CD4-positive, alpha-beta T cell (primary cell): ENCODE measurements at regions of chr2 and their contacts with region 1.

Region 1: GRCh38 chr2:100427628-100428258 is 10.3 kb upstream of the CHST10 start:
- DNase-seq: peak; percentile 55 to 77 (median 65)
- ATAC-seq: peak; percentile 79
- H3K4me3 ChIP-seq: no peak overlapping the region
- H3K4me3 Mint-ChIP-seq: no peak overlapping the region
- H3K27ac ChIP-seq: no peak overlapping the region
- H3K27ac Mint-ChIP-seq: no peak overlapping the region
- H3K4me1 ChIP-seq: peaks cover 2% of the 10 kb centered on the region
- H3K4me1 Mint-ChIP-seq: peaks cover 7% of the 10 kb centered on the region
- H3K27me3 ChIP-seq: no peaks in the 10 kb centered on the region
- H3K27me3 Mint-ChIP-seq: peaks cover 15% of the 10 kb centered on the region
- CTCF ChIP-seq: peak; percentile 66

Region 2: DNA sequence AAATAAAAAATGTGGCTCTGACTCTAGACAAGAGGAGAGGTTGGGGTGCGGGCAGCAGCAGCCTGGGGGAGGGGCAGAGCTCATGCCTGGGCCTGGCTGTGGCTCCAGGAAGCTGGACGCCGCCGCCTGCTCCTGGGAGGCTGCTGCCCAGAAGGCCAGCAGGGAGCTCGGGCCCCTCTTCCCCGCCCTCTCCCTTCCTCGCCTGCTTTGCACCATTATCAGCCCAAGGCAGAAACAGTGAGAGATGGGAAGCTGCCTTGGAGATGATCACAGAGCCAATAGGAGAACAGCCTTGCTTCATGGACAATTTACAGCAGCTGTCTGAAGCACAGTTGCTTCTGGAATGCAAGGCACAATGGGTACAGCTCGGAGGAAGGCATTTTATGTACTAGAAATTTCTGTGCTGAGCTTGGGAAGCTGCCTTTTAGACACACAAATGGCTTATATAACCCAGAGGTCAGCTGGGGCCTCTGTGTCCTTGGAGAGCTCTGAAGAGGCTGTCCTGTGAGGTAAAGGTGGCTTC is 230.1 kb before region 1 on chr2:
- CTCF ChIA-PET with region 1: no interaction called
- POLR2A ChIA-PET with region 1: no interaction called
- intact Hi-C with region 1: loop called in 1 of 2 experiments (anchors 2 kb)
- DNase-seq: no peak
- ATAC-seq: no peak
- H3K4me3 ChIP-seq: no peak overlapping the region
- H3K4me3 Mint-ChIP-seq: no peak overlapping the region
- H3K27ac ChIP-seq: no peak overlapping the region
- H3K27ac Mint-ChIP-seq: no peak overlapping the region
- H3K4me1 ChIP-seq: no peaks in the 10 kb centered on the region
- H3K4me1 Mint-ChIP-seq: no peaks in the 10 kb centered on the region
- H3K27me3 ChIP-seq: no peaks in the 10 kb centered on the region
- H3K27me3 Mint-ChIP-seq: no peaks in the 10 kb centered on the region
- CTCF ChIP-seq: no peak

Region 3: GRCh38 chr2:100381240-100381639 is 46.5 kb before region 1 on chr2:
- CTCF ChIA-PET with region 1: no interaction called
- POLR2A ChIA-PET with region 1: no interaction called
- intact Hi-C with region 1: no loop called
- DNase-seq: peak; percentile 39 to 77 (median 57)
- ATAC-seq: no peak
- H3K4me3 ChIP-seq: no peak overlapping the region
- H3K4me3 Mint-ChIP-seq: no peak overlapping the region
- H3K27ac ChIP-seq: no peak overlapping the region
- H3K27ac Mint-ChIP-seq: no peak overlapping the region
- H3K4me1 ChIP-seq: no peaks in the 10 kb centered on the region
- H3K4me1 Mint-ChIP-seq: no peaks in the 10 kb centered on the region
- H3K27me3 ChIP-seq: no peaks in the 10 kb centered on the region
- H3K27me3 Mint-ChIP-seq: no peaks in the 10 kb centered on the region
- CTCF ChIP-seq: peak; percentile 90

Region 4: DNA sequence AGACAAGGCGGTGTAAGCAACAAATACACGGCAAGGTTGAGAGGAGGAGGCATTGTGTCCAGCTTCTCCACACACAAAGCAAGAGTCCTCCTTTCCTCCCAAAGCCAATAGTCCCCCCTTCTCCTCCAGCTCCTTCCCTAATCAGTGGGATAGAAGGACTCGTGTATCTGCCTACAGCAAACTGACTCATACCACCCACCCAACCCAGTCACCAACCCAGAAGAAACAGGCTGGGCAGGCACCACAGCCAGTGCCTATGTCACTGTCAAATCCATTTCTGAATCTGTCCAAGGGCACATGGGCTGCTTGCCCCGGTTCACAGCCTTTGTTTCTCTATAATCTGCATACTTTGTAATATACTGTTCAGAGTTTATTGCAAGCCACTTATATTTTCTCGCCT is 23.3 kb after region 1 on chr2:
- CTCF ChIA-PET with region 1: no interaction called
- POLR2A ChIA-PET with region 1: no interaction called
- intact Hi-C with region 1: no loop called
- DNase-seq: no peak
- ATAC-seq: no peak
- H3K4me3 ChIP-seq: no peak overlapping the region
- H3K4me3 Mint-ChIP-seq: no peak overlapping the region
- H3K27ac ChIP-seq: no peak overlapping the region
- H3K27ac Mint-ChIP-seq: no peak overlapping the region
- H3K4me1 ChIP-seq: no peaks in the 10 kb centered on the region
- H3K4me1 Mint-ChIP-seq: no peaks in the 10 kb centered on the region
- H3K27me3 ChIP-seq: no peaks in the 10 kb centered on the region
- H3K27me3 Mint-ChIP-seq: peaks cover 8% of the 10 kb centered on the region
- CTCF ChIP-seq: no peak

Region 5: GRCh38 chr2:100554798-100555407 is 127.2 kb after region 1 on chr2:
- CTCF ChIA-PET with region 1: no interaction called
- POLR2A ChIA-PET with region 1: no interaction called
- intact Hi-C with region 1: loop called in 1 of 2 experiments (anchors 5 kb)
- DNase-seq: peak in 13 of 14 experiments; percentile 9 to 74 (median 40)
- ATAC-seq: peak; percentile 80
- H3K4me3 ChIP-seq: no peak overlapping the region
- H3K4me3 Mint-ChIP-seq: peak overlapping the region; percentile 38
- H3K27ac ChIP-seq: peak overlapping the region in 1 of 2 donors; percentile 41
- H3K27ac Mint-ChIP-seq: peak overlapping the region; percentile 86
- H3K4me1 ChIP-seq: peaks cover 20% of the 10 kb centered on the region
- H3K4me1 Mint-ChIP-seq: peaks cover 38% of the 10 kb centered on the region
- H3K27me3 ChIP-seq: no peaks in the 10 kb centered on the region
- H3K27me3 Mint-ChIP-seq: no peaks in the 10 kb centered on the region
- CTCF ChIP-seq: no peak